ENCODE measurements at regions of chr18 and their contacts with region 1.

Region 1: GRCh38 chr18:21179590-21180220 is 62.3 kb upstream of the GREB1L start:
- DNase-seq: peak; percentile 33 to 74 (median 44)
- H3K4me3 ChIP-seq: no peak overlapping the region
- H3K27ac ChIP-seq: no peak overlapping the region
- H3K4me1 ChIP-seq: no peaks in the 10 kb centered on the region
- H3K27me3 ChIP-seq: no peaks in the 10 kb centered on the region
- CTCF ChIP-seq: peak; percentile 46 to 75 (median 70)
- POLR2A ChIP-seq: no peak

Region 2: DNA sequence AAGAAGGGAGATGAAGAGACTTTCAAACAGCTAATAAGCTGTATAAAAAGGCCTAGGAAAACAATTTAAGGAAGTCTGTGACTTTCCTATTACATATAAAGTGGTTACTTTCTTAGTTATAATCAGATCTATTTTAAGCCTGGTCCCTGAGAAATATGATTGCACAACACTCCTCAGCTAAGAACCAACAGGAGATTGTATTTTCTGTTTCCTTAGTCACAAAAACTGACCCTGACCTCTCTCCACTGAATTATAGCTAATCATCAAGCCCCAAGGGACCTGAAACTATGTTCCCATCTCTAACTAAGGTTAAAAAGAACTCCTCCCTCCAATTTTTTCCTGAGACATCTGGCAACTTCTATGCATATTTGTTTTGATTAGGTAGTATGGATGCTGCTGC is 175.0 kb before region 1 on chr18:
- intact Hi-C with region 1: loop called in 1 of 2 experiments (anchors 10 kb)
- DNase-seq: peak in 4 of 7 donors; percentile 29 to 34 (median 32)
- H3K4me3 ChIP-seq: no peak overlapping the region
- H3K27ac ChIP-seq: peak overlapping the region; percentile 50 to 68 (median 62)
- H3K4me1 ChIP-seq: peaks cover 19 to 37% of the 10 kb centered on the region in 2 donors
- H3K27me3 ChIP-seq: no peaks in the 10 kb centered on the region
- CTCF ChIP-seq: no peak
- POLR2A ChIP-seq: no peak

Region 3: DNA sequence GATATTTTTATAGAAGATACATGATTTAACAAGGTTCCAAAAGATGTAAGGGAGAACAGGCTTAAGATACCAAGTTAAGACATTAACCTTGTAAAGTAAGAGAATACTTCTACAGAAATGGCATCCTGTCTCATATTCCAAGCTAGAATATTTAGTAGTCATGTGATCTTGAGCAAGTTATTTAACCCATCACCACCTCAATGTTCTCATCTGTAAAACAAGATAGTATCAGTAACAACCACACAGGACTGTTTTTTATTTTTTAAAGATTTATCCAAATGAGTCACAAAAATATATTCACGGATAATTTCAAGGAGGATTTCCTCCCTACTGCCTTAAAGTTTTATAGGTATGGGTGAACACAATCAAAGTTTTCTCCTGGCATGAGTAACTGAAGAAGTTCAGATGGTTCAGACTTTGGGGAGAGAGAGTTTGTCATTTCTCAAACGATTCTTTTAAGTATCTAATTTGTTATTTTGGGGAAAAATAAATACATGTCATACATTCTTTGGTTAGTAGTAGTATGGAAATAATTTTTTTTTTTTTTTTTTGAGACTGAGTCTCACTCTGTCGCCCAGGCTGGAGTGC is 94.0 kb before region 1 on chr18:
- intact Hi-C with region 1: no loop called
- DNase-seq: no peak
- H3K4me3 ChIP-seq: no peak overlapping the region
- H3K27ac ChIP-seq: no peak overlapping the region
- H3K4me1 ChIP-seq: peaks cover 0 to 20% of the 10 kb centered on the region in 2 donors
- H3K27me3 ChIP-seq: no peaks in the 10 kb centered on the region
- CTCF ChIP-seq: no peak
- POLR2A ChIP-seq: no peak

Region 4: DNA sequence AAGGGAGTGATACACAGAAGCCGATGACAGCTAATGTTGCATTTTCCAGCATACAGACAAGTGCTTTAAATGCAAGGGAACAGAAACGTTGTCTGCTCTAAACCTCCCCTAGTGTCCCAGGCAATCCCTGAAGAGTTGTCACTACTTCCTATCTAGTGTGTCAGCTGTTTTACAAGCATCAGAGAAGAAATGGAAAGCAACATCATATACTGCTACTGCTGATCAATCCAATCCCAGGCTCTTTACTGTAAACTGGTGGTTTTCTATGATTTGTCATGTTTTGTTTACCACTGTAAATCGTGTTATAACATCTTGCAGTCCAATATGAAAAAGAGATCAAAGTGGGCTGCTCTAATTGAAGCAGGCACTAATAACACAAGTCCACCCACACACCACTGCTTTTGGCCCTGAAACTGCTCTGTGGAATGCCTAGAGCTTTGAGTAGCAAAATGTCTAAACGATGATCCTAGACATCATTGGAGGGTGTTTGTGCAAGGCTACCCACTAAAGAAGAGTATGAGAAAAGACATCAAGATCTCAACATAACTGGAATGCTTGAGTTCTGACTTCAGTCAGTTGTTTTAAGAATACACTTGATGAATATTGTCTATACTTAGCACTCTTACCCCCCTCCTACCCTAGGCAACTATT is 50.0 kb before region 1 on chr18:
- intact Hi-C with region 1: loop called in 1 of 2 experiments (anchors 10 kb)
- DNase-seq: no peak
- H3K4me3 ChIP-seq: no peak overlapping the region
- H3K27ac ChIP-seq: no peak overlapping the region
- H3K4me1 ChIP-seq: peaks cover 0 to 7% of the 10 kb centered on the region in 2 donors
- H3K27me3 ChIP-seq: no peaks in the 10 kb centered on the region
- CTCF ChIP-seq: no peak
- POLR2A ChIP-seq: no peak

Region 5: DNA sequence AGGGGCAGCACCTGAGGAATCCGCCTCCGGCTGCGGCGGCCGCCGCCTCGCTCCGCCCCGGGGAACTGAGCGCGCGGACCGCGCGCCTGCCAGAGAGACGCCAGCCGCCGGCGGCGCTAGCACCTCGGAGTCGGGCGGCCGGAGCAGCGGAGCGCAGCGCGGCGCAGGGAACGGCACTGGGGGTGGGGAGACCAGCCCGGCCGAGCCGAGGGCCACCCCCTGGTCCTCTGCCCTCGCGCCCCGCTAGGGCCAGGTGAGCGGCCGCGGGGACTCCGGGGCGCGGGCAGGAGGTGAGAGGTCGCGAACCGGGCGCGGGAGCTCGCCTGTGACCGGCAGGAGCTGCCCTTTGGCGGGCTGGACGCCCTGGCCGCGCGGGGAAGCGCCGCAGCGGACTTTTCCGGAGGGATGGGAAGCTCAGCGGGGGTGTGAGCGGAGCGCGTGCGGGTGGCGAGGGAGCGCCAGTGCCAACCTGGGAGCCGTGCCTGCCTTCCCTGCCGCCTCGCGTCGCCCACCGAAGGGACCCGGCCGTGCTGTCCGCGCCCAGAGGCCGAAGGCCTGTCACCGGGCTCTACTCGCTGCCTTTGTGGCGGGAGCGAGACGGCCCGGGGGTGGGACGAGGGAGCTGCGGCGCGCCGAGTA is 62.6 kb after region 1 on chr18 and contains the start of gene GREB1L:
- intact Hi-C with region 1: no loop called
- DNase-seq: peak in 6 of 7 donors; percentile 12 to 55 (median 24)
- H3K4me3 ChIP-seq: peak within 1 kb of the TSS in 2 of 4 donors; percentile 4 to 57
- H3K27ac ChIP-seq: peak within 1 kb of the TSS in 1 of 5 donors; percentile 65
- H3K4me1 ChIP-seq: peaks cover 0 to 11% of the 10 kb centered on the region in 2 donors
- H3K27me3 ChIP-seq: peaks cover 34% of the 10 kb centered on the region
- CTCF ChIP-seq: peak in 1 of 6 experiments; percentile 14
- POLR2A ChIP-seq: no peak
- total RNA-seq, gene GREB1L: 0.39 to 4.9 (median 1.2) TPM

Region 6: GRCh38 chr18:22412176-22412908 is 1232.6 kb after region 1 on chr18:
- intact Hi-C with region 1: no loop called
- DNase-seq: peak in 2 of 7 donors; percentile 25 to 41
- H3K4me3 ChIP-seq: no peak overlapping the region
- H3K27ac ChIP-seq: no peak overlapping the region
- H3K4me1 ChIP-seq: no peaks in the 10 kb centered on the region
- H3K27me3 ChIP-seq: no peaks in the 10 kb centered on the region
- CTCF ChIP-seq: no peak
- POLR2A ChIP-seq: no peak